Activated CD8-positive, alpha-beta T cell treated with anti-CD3 and anti-CD28 coated beads, Interleukin-2, amount 10 ng/mL, durations not matched to agents 7 days and 5 days (primary cell): ENCODE measurements at regions of chr9 and their contacts with region 1.

Region 1: GRCh38 chr9:100208673-100209072 is 109.6 kb downstream of the INVS start:
- DNase-seq: no peak
- ATAC-seq: no peak
- H3K4me3 Mint-ChIP-seq: no peak overlapping the region
- H3K27ac Mint-ChIP-seq: no peak overlapping the region
- H3K4me1 Mint-ChIP-seq: peaks cover 8% of the 10 kb centered on the region
- H3K27me3 Mint-ChIP-seq: no peaks in the 10 kb centered on the region

Region 2: DNA sequence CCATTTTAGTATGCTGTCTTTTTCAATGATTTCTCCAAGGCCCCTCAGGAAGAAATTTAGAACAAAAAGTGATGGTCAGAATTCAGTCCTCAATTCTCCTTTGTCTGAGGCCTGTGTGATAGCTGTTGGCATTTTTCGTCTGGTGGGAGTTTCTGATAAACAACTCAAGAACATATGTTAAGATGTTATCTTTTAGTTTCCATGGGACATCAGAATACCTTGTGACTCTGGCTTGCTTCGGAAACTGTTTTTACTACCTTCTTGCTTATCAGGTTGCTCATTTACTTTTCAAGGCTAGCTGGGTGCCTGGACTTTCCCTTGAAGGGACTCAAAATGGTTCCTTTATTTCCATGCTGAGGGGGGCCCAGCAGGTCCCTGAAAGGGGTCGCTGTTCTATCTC is 12.5 kb before region 1 on chr9:
- CTCF ChIA-PET with region 1: no interaction called
- POLR2A ChIA-PET with region 1: no interaction called
- DNase-seq: no peak
- ATAC-seq: no peak
- H3K4me3 Mint-ChIP-seq: no peak overlapping the region
- H3K27ac Mint-ChIP-seq: no peak overlapping the region
- H3K4me1 Mint-ChIP-seq: no peaks in the 10 kb centered on the region
- H3K27me3 Mint-ChIP-seq: no peaks in the 10 kb centered on the region

Region 3: DNA sequence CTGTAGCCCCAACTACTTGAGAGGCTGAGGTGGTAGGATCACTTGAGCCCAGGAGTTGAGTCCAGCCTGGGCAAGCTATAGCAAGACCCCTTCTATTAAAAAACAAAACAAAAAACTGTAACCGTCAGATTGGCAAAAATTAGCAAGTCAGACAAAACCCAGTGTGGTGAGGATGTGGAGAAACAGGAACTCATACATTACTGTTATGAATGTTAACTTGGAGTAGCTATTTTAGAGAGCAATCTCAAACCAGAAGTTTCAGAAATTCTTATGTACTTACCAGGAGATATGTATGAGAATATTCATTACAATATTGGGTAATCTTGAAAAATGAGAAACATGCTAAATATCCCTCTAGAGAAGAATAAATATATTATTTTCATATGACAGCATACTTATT is 10.7 kb after region 1 on chr9:
- CTCF ChIA-PET with region 1: interaction called, 10 read pairs
- POLR2A ChIA-PET with region 1: interaction called, 6 read pairs
- DNase-seq: no peak
- ATAC-seq: no peak
- H3K4me3 Mint-ChIP-seq: no peak overlapping the region
- H3K27ac Mint-ChIP-seq: no peak overlapping the region
- H3K4me1 Mint-ChIP-seq: peaks cover 15% of the 10 kb centered on the region
- H3K27me3 Mint-ChIP-seq: no peaks in the 10 kb centered on the region

Region 4: DNA sequence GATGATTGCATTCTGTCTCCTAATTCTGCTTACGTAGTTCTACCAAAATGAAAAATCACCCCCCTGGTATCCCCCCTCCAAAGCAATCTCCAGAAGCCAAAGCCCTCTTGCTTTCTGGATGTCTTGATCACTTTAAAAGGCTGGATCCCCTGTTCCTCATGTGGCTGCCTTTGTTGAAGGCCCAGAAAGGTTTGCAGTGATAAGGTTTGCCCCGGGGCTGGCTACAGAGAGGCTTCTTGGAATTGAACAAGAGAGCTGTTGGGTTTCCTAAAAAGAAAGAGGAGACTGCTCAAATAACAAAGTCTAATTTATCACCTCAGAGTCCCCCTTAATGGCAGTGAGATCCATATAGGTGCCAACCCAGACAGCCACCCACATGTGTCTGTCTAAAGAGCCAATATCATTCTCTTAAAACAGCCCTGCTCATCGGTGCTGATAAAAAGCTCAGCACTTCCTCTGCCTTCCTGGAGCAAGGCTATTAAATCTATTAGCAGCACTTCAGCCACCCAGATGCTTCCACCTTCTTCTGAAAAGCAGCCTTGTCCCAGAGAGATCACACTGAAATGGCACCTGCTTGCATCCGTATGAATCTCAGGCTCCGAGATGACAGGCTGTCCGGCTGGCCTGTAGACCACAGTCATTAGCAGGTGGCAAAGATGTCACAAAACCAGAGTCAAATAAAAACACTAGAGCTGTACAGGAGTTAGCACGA is 73.2 kb after region 1 on chr9:
- CTCF ChIA-PET with region 1: no interaction called
- POLR2A ChIA-PET with region 1: no interaction called
- DNase-seq: no peak
- ATAC-seq: no peak
- H3K4me3 Mint-ChIP-seq: no peak overlapping the region
- H3K27ac Mint-ChIP-seq: no peak overlapping the region
- H3K4me1 Mint-ChIP-seq: no peaks in the 10 kb centered on the region
- H3K27me3 Mint-ChIP-seq: no peaks in the 10 kb centered on the region

Region 5: DNA sequence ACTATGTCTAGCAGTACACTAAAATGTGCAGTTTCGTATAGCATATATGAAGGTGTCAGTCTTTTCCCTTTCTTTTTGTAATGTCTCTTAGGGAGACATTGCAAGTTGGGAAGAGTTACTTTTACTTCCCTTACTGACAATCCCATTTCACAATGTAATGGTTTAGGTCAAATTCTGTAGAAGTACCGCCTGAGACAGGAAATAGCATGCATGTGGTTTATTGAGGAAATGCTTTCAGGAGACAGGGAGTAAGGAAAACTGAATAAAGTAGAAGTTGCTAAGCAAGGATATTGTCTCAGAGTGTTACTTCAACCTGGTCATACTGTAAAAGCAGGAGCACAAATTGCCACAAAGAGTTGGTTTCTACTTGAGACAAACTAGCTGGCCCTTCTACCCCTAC is 186.1 kb after region 1 on chr9:
- CTCF ChIA-PET with region 1: no interaction called
- POLR2A ChIA-PET with region 1: no interaction called
- DNase-seq: no peak
- ATAC-seq: no peak
- H3K4me3 Mint-ChIP-seq: no peak overlapping the region
- H3K27ac Mint-ChIP-seq: no peak overlapping the region
- H3K4me1 Mint-ChIP-seq: no peaks in the 10 kb centered on the region
- H3K27me3 Mint-ChIP-seq: no peaks in the 10 kb centered on the region

Region 6: GRCh38 chr9:100540327-100540726 is 331.7 kb after region 1 on chr9:
- CTCF ChIA-PET with region 1: no interaction called
- POLR2A ChIA-PET with region 1: no interaction called
- DNase-seq: no peak
- ATAC-seq: no peak
- H3K4me3 Mint-ChIP-seq: no peak overlapping the region
- H3K27ac Mint-ChIP-seq: no peak overlapping the region
- H3K4me1 Mint-ChIP-seq: no peaks in the 10 kb centered on the region
- H3K27me3 Mint-ChIP-seq: no peaks in the 10 kb centered on the region